ENCODE measurements at regions of chr14 and their contacts with region 1.

Region 1: DNA sequence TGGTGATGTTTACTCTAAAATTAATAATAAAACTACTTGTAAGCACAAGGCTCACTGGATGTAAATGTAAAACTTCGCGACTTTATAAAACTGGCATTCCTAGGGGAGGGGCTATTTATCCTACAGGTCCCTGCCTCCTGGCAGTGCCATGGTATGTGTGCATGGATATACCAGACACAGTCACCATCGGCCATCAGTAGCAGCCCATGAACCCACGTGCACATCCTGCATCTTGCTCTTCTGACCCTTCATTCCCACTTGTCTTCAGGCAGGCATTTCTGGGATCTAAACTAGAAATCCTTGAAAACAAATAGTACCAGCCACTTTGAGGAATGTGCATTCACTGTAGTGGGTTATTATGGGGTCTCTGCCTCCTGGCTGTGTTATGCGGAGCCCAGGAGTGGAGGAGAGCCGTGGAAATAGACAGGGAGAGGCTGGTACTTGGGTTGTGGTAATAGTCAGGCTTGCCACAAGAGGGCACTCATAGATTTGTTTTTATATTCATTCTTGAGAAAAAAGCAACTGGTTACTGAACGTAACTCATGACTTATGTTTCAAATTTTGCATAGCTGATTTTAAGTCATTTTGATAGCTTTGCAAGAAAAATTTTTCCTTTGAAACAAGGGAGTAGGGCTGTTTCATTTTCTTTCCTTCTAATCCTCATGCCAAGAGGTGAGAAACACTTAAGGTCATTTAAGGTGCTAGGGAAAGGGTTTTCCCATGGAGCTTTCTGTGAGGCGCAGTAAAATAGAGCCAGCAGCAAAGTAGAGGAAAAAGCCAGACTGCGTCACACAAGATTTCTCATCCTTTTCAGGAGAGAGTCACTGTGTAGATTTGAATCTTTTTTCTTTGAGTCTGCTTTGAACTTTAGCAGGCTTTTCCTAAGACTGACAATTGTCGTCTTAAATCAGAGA is 17.4 kb upstream of the GALNT16 start:
- DNase-seq: peak in 1 of 2 experiments; percentile 70
- H3K4me3 ChIP-seq: no peak overlapping the region
- H3K27ac ChIP-seq: no peak overlapping the region
- H3K4me1 ChIP-seq: no peaks in the 10 kb centered on the region
- H3K27me3 ChIP-seq: no peaks in the 10 kb centered on the region
- CTCF ChIP-seq: peak; percentile 39 to 65 (median 64)
- EP300 ChIP-seq: no peak
- POLR2A ChIP-seq: no peak
- RAD21 ChIP-seq: peak; percentile 75 to 79

Region 2: DNA sequence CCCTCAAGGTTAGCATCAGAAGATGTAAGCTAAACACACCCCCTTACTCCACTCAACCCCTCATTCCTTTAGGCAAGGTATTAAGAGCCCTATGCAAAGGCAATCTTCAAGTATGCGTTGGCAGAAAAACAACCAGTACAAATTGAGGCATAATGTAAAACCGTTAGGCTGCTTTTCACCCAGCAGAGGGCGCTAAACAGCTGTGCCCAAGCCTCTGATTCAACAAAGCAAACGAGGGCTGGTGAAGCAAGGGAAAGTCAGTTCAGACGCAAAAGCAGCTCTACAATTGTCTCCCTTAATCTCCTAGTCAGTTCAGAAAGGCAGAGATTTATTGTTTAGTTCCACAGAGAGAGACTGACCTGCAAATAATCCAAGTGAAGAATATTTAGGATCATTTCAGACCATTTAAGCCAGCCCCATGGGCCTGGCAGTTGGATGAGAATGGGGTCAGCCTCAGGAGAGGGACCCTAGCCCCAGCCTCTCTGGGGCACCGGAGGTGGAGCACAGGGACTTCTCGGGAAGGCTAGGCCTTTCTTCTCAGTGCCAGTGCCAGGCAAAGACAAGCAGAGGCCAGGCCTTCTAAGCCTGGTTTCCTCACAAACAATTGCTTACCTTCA is 113.2 kb before region 1 on chr14:
- CTCF ChIA-PET with region 1: interaction called, 11 read pairs
- POLR2A ChIA-PET with region 1: no interaction called
- DNase-seq: peak in 1 of 2 experiments; percentile 73
- H3K4me3 ChIP-seq: no peak overlapping the region
- H3K27ac ChIP-seq: peak overlapping the region; percentile 1; the same call in 1 of the 2 replicates
- H3K4me1 ChIP-seq: peaks cover 0 to 4% (median 2%) of the 10 kb centered on the region in 4 experiments; a peak in 3 of 7 replicates
- H3K27me3 ChIP-seq: no peaks in the 10 kb centered on the region
- CTCF ChIP-seq: peak; percentile 62 to 98 (median 85)
- EP300 ChIP-seq: no peak
- POLR2A ChIP-seq: peak in 1 of 2 experiments; percentile 23; a peak in 1 of 3 replicates
- RAD21 ChIP-seq: peak; percentile 87 to 94

Region 3: GRCh38 chr14:69153131-69153872 is 89.3 kb before region 1 on chr14:
- CTCF ChIA-PET with region 1: interaction called, 12 read pairs
- POLR2A ChIA-PET with region 1: no interaction called
- DNase-seq: peak; percentile 77 to 82
- H3K4me3 ChIP-seq: peak overlapping the region; percentile 62 to 89 (median 78)
- H3K27ac ChIP-seq: no peak overlapping the region
- H3K4me1 ChIP-seq: peaks cover 0 to 6% (median 5%) of the 10 kb centered on the region in 4 experiments
- H3K27me3 ChIP-seq: peaks cover 0 to 12% (median 5%) of the 10 kb centered on the region in 4 experiments; a peak in 5 of 7 replicates
- CTCF ChIP-seq: no peak
- EP300 ChIP-seq: no peak
- POLR2A ChIP-seq: peak in 1 of 2 experiments; percentile 32; a peak in 1 of 3 replicates
- RAD21 ChIP-seq: no peak

Region 4: DNA sequence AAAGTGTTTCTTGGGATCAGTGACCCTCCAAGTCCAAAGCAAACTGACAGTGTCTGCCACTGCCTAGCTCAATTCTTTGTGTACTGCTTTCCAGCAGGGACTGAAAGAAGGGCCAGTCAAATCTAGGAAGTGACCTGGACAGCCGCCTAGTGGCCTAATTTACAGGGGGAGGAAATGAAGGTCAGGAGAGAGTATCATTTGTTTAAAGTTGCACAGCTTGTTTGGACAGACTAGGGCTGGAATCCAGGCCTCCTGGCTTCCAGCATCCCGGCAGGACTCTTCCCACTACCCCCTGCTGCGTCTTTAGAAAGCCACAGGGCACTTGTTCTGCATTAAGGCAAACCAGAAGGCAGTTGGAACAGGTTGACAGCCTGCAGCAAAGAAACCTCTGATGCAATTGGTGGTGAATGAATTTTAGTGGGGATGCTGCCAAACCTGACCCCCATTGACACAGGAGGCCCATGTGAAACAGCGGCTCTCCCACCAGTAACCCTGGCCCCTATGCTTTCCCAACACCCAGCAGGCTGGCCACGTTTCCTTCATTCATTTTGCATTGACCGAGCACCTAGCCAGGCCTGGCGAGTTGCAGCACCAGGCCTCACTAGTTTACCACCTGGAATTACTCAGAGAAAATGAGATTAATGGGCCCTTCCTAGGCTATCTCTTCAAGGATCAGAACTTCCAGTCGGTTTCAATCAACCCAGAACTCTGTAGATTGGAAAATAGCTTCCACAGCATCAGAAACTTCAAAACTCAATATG is 45.6 kb after region 1 on chr14:
- CTCF ChIA-PET with region 1: interaction called, 14 read pairs
- POLR2A ChIA-PET with region 1: no interaction called
- DNase-seq: peak in 1 of 2 experiments; percentile 46
- H3K4me3 ChIP-seq: no peak overlapping the region
- H3K27ac ChIP-seq: no peak overlapping the region
- H3K4me1 ChIP-seq: peaks cover 0 to 5% (median 2%) of the 10 kb centered on the region in 4 experiments; a peak in 4 of 7 replicates
- H3K27me3 ChIP-seq: no peaks in the 10 kb centered on the region; a peak in 1 of 7 replicates
- CTCF ChIP-seq: peak in 2 of 3 experiments; percentile 25 to 60; a peak in 2 of 4 replicates
- EP300 ChIP-seq: no peak
- POLR2A ChIP-seq: no peak
- RAD21 ChIP-seq: peak; percentile 19 to 28; a peak in 3 of 4 replicates

Region 5: GRCh38 chr14:69354383-69355153 is 112.0 kb after region 1 on chr14:
- CTCF ChIA-PET with region 1: interaction called, 130 read pairs
- POLR2A ChIA-PET with region 1: no interaction called
- DNase-seq: no peak
- H3K4me3 ChIP-seq: no peak overlapping the region
- H3K27ac ChIP-seq: no peak overlapping the region
- H3K4me1 ChIP-seq: peaks cover 0 to 5% (median 2%) of the 10 kb centered on the region in 4 experiments; a peak in 4 of 7 replicates
- H3K27me3 ChIP-seq: no peaks in the 10 kb centered on the region
- CTCF ChIP-seq: no peak
- EP300 ChIP-seq: no peak
- POLR2A ChIP-seq: no peak
- RAD21 ChIP-seq: no peak

Region 6: GRCh38 chr14:69363055-69363454 is 120.5 kb after region 1 on chr14:
- CTCF ChIA-PET with region 1: interaction called, 130 read pairs
- POLR2A ChIA-PET with region 1: no interaction called
- DNase-seq: peak in 1 of 2 experiments; percentile 27
- H3K4me3 ChIP-seq: no peak overlapping the region
- H3K27ac ChIP-seq: no peak overlapping the region
- H3K4me1 ChIP-seq: peaks cover 0 to 3% (median 0%) of the 10 kb centered on the region in 4 experiments; a peak in 1 of 7 replicates
- H3K27me3 ChIP-seq: no peaks in the 10 kb centered on the region
- CTCF ChIP-seq: peak; percentile 88 to 95 (median 88)
- EP300 ChIP-seq: no peak
- POLR2A ChIP-seq: no peak
- RAD21 ChIP-seq: peak; percentile 93 to 95

Region 7: DNA sequence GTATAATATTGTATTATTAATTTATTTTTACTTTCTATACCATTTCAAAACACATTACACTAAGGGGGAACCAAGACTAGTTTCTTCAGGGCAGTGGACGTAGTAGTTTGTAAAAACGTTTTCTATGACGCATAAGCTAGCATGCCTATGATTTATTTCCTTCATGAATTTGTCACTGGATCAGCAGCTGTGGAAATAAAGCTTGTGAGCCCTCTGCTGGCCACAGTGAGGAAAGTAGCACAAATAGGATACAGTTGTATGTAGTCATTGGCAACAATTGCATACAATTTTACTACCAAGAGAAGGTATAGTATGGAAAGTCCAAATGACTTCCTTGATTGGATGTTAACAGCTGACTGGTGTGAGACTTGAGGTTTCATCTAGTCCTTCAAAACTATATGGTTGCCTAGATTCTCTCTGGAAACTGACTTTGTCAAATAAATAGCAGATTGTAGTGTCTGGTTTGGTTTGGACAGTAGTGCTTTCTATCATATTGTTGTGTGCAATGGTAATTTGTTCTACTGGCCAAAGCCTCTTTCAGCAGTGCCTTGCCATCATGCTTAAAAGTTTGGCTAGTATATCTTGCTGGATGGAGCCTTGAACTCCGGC is 217.6 kb after region 1 on chr14:
- CTCF ChIA-PET with region 1: interaction called, 16 read pairs
- POLR2A ChIA-PET with region 1: no interaction called
- DNase-seq: no peak
- H3K4me3 ChIP-seq: no peak overlapping the region
- H3K27ac ChIP-seq: no peak overlapping the region
- H3K4me1 ChIP-seq: no peaks in the 10 kb centered on the region
- H3K27me3 ChIP-seq: no peaks in the 10 kb centered on the region
- CTCF ChIP-seq: peak in 2 of 3 experiments; percentile 60 to 80; a peak in 3 of 4 replicates
- EP300 ChIP-seq: no peak
- POLR2A ChIP-seq: no peak
- RAD21 ChIP-seq: peak; percentile 70 to 75

Region 8: DNA sequence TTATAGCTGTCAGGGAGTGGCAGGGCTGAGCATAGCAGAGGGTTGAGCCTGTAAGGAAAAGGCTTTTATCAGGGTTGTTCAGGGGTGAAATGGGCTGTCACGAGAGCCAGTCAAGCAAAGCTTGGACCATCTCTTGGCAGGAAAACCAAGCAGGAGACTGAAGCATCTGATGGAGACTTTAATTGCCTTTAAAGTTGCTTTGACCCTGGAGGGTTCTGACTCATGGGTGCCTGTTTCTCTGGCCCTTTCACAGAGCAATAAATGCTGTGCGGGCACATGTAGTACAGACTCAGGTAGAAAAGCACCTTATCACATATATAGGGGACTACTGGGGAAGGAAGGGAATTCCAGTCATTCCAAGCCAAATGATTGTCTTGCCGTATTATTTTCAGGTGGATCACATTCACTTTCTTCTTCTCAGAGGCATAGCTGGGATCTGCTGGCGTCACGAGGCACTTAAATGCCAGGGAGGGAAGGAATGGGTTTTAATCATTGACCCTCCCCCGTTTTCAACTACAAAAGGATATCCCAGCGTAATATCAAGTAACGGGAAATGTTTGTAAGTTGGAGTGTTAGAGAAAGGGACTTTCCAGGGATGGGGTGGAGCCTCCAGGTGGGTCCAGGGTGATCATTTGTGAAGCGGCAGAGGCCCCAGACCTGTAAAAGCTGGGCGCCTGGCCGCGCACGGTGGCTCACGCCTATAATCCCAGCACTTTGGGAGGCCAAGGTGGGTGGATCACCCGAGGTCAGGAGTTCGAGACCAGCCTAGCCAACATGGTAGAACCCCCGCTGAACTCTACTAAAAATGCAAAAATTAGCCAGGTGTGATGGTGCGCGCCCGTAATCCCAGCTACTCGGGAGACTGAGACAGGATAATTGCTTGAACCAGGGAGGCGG is 276.9 kb after region 1 on chr14:
- CTCF ChIA-PET with region 1: no interaction called
- POLR2A ChIA-PET with region 1: no interaction called
- DNase-seq: no peak
- H3K4me3 ChIP-seq: no peak overlapping the region
- H3K27ac ChIP-seq: no peak overlapping the region
- H3K4me1 ChIP-seq: peaks cover 0 to 7% (median 3%) of the 10 kb centered on the region in 4 experiments; a peak in 4 of 7 replicates
- H3K27me3 ChIP-seq: no peaks in the 10 kb centered on the region; a peak in 1 of 7 replicates
- CTCF ChIP-seq: no peak
- EP300 ChIP-seq: no peak
- POLR2A ChIP-seq: no peak
- RAD21 ChIP-seq: no peak

Measured in H1 (cell line).